WTC11 (cell line): ENCODE measurements at regions of chr16 and their contacts with region 1.

Region 1: DNA sequence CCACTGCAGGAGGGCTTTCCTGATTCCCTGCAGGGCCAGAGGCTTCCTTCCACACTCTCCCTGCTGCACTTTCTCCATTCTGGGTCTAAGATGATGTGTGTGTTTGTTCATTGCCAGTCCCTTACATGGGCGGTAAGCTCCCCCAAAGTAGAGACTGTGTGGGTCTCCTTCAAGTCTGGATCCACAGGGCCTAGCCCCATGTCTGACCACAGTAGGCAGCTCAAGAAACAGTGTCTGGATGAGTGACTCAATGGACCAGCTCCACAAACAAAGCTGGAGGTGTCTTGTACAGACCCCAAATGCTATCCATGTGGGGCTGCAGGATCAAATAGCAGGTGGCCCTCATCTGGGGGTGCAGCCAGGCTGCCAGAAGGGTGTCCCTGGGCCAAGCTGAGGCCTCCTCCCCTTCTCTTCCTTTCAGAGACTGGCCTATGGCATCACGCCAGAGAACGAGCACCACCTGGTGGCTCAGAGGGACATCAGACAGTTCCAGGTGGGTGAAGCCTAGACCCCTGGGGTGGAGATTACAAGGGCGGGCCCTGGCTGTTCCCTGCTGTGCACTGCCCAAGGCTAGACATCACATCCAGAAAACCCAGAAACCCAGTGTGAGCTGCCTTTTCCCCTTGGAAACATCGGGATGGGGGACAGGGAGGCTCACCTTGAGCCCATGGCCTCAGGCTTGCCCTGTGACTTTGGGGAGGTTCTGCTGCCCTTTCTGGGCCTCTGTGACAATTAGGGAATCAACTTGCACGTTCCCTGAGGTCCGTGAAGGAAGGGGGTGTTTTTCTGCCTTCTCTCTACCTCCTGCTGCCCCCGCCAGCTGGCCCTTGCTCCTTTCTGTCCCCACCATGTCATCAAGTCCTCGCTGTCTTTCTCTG is 45.9 kb downstream of the SLC6A2 start:
- DNase-seq: peak; percentile 71
- ATAC-seq: peak; percentile 83
- H3K4me3 Mint-ChIP-seq: no peak overlapping the region
- H3K27ac Mint-ChIP-seq: no peak overlapping the region
- H3K4me1 Mint-ChIP-seq: peaks cover 32% of the 10 kb centered on the region
- H3K27me3 Mint-ChIP-seq: no peaks in the 10 kb centered on the region
- CTCF ChIP-seq: peak; percentile 70

Region 2: DNA sequence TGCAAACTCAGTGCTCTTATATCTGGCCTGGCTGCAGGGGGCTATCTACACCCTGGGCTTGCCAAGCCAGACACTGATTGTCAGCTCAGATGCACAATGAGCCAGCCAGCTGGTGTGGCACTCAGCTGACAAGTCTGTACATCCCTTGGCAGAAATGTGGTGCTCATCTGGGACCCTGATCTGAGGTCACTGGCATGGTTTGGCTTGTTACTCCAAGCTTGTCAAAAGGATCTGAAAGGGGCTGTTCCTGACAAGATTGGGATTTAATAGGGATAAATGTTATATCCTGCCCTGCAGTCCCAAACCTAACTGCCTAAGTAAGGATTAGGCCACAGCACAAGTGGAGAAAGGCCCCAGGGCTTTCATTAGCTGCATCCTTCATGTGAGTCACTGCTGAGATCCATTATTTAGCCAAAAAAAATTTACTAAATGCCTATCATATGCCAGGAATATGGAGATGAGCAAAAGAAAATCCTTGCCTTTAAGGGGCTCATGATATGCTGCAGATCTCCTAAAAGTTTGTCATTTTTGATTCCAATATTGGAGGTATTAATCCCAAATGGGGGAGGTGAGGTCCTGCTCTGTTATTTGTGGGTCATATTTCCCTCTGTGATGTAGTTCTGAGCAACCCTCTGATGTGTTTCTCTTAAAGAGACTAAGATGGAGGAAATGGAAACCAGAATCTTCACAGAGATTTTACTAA is 39.6 kb before region 1 on chr16:
- CTCF ChIA-PET with region 1: interaction called, 18 read pairs
- POLR2A ChIA-PET with region 1: no interaction called
- DNase-seq: no peak
- ATAC-seq: no peak
- H3K4me3 Mint-ChIP-seq: no peak overlapping the region
- H3K27ac Mint-ChIP-seq: no peak overlapping the region
- H3K4me1 Mint-ChIP-seq: peaks cover 3% of the 10 kb centered on the region; the same call in 1 of the 2 replicates
- H3K27me3 Mint-ChIP-seq: peaks cover 34% of the 10 kb centered on the region
- CTCF ChIP-seq: no peak